ENCODE measurements at regions of chr3 and their contacts with region 1.

Region 1: GRCh38 chr3:168100777-168101492 is 5.2 kb upstream of the GOLIM4 start:
- H3K4me3 Mint-ChIP-seq: no peak overlapping the region
- H3K27ac Mint-ChIP-seq: no peak overlapping the region
- H3K4me1 Mint-ChIP-seq: no peaks in the 10 kb centered on the region
- H3K27me3 Mint-ChIP-seq: no peaks in the 10 kb centered on the region

Region 2: DNA sequence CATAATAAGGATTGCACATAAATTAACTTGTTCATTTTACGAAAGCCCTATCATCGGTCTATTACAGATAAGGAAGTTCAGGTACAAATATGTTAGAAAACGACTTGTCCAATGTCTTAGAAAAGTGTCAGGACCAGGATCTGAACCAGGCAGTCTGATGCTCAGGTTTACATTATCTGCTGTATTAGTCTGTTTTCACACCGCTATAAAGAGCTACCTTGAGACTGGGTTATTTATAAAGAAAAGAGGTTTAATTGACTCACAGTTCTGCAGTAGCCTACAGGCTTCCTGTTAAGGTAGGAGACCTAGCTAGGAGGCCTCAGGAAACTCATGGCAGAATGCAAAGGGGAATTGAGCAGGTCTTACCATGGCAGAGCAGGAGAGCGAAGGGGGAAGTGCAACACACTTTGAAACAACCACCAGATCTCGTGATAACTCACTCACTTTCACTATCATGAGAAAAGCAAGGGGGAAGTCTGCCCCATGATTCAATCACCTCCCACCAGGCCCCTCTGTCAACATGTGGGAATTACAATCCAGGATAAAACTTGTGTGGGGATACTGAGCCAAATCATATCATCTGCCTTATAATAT is 40.6 kb after region 1 on chr3:
- intact Hi-C with region 1: loop called (anchors 5 kb)
- H3K4me3 Mint-ChIP-seq: no peak overlapping the region
- H3K27ac Mint-ChIP-seq: no peak overlapping the region
- H3K4me1 Mint-ChIP-seq: peaks cover 7% of the 10 kb centered on the region
- H3K27me3 Mint-ChIP-seq: no peaks in the 10 kb centered on the region

Region 3: DNA sequence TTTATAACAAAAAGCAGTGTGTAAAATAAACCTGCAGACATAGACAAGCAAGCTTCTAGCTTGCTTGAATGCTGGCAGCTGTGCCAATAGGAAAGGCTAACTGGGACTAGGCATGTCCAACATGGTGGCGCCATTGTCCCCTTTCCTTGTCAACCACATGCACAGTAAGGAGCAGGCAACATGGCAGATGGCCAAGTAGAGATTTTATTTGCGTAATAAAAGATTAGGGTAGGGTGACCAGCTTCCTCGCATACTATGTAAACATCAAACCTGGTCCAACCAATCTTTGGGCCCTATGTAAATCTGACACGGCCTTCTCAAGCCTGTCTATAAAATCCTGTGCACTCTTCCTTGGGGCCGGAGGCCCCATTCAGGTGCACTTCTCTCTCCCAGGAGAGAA is 570.1 kb after region 1 on chr3:
- intact Hi-C with region 1: no loop called
- H3K4me3 Mint-ChIP-seq: no peak overlapping the region
- H3K27ac Mint-ChIP-seq: no peak overlapping the region
- H3K4me1 Mint-ChIP-seq: no peaks in the 10 kb centered on the region
- H3K27me3 Mint-ChIP-seq: no peaks in the 10 kb centered on the region